Activated B cell treated with CpG ODN at 0.5 μM for 24 hours (primary cell): ENCODE measurements at regions of chr22 and their contacts with region 1.

Region 1: GRCh38 chr22:31080848-31081649 is at the start of gene SMTN:
- DNase-seq: peak; percentile 93
- ATAC-seq: peak; percentile 75
- H3K4me3 Mint-ChIP-seq: peak within 1 kb of the TSS; percentile 90
- H3K27ac Mint-ChIP-seq: no peak within 1 kb of the TSS
- H3K4me1 Mint-ChIP-seq: peaks cover 36% of the 10 kb centered on the region
- H3K27me3 Mint-ChIP-seq: no peaks in the 10 kb centered on the region
- CTCF ChIP-seq: no peak
- total RNA-seq, gene SMTN: 2.8 and 3.1 TPM in 2 replicates

Region 2: DNA sequence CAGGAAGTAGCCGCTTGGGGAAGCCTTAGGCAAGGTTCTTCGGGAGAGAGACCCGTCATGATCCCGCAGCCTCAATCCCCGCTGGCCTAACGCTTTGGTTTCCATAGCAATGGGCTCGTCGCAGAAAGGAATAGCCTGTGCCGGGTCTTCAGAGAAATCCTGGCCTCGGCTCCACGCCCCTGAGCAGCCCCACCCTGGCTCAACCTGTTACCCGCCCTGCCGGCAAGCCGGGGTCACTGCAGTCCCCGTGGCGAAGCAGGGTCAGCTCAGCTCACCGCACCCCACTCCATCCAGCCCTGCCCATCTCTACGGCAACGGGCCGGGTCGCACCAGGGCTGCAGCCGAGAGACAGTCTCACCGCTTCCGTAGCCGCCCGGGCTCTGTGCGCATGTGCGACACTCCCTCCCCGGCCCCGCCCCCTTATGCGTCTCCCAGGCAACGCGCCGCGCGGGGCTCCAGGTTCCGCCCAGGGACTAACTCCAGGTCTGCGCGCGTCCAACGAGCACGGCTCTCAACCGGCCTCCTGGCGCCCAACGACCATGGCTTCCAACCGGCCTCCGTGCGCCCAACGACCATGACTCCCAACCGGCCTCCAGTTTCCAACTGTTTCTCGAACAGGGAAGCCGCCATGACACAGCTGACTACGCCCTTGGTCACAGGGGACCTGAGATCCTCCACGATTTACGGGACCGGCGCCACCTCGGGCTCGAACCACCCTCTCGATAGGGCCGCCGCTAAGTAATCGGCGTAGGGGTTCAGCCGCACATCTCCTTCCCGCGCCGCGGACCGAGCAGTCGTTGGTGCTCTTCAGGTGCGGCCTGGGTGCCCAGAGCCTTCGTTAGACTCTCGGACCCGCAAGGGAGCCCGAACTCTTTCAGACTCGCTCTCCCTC is 413.3 kb before region 1 on chr22 and contains the start of gene DUSP18:
- CTCF ChIA-PET with region 1: no interaction called
- POLR2A ChIA-PET with region 1: no interaction called
- intact Hi-C with region 1: loop called (anchors 10 kb)
- DNase-seq: peak; percentile 95
- ATAC-seq: peak; percentile 94
- H3K4me3 Mint-ChIP-seq: peak within 1 kb of the TSS; percentile 97
- H3K27ac Mint-ChIP-seq: peak within 1 kb of the TSS; percentile 86
- H3K4me1 Mint-ChIP-seq: peaks cover 18% of the 10 kb centered on the region
- H3K27me3 Mint-ChIP-seq: no peaks in the 10 kb centered on the region
- CTCF ChIP-seq: no peak
- total RNA-seq, gene DUSP18: 12.0 and 13.5 TPM in 2 replicates

Region 3: GRCh38 chr22:30968924-30969539 is 112.0 kb before region 1 on chr22 and contains the start of gene TUG1:
- CTCF ChIA-PET with region 1: interaction called, 6 read pairs
- POLR2A ChIA-PET with region 1: interaction called, 41 read pairs
- intact Hi-C with region 1: loop called (anchors 1 kb)
- DNase-seq: peak; percentile 93
- ATAC-seq: peak; percentile 92
- H3K4me3 Mint-ChIP-seq: peak within 1 kb of the TSS; percentile 95
- H3K27ac Mint-ChIP-seq: peak within 1 kb of the TSS; percentile 94
- H3K4me1 Mint-ChIP-seq: peaks cover 56% of the 10 kb centered on the region
- H3K27me3 Mint-ChIP-seq: no peaks in the 10 kb centered on the region
- CTCF ChIP-seq: no peak
- total RNA-seq, gene TUG1: 70.4 and 83.0 TPM in 2 replicates

Region 4: DNA sequence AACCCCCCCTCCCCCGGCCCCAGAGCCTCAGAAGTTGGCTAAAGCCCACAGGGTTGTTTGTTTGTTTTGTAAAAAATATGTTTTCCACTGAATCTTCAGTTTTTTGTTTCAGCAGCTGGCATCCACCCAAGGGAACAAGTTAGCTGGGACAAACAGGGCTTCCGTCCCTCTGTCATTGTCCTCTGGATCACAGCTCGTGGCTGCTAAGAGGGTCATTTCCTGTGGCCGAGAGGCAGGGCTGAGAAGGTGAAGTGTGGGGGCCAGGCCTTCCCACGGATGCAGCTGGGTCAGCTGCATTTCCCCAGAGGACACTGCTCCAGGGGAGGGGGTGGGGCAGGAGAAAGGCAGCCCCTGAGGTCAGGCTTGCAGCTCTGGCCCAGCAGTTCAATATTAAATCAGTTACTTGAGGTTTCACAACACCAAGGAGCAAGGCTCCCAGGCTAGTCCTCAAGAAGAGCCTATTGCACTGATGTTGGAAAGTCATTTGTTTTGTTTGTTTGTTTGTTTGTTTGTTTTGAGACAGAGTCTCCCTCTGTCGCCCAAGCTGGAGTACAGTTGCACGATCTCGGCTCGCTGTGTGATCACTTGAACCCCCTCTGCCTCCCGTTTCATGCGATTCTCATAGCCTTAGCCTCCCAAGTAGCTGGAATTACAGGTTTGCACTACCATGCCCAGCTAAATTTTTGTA is 34.4 kb before region 1 on chr22:
- CTCF ChIA-PET with region 1: no interaction called
- POLR2A ChIA-PET with region 1: no interaction called
- intact Hi-C with region 1: no loop called
- DNase-seq: no peak
- ATAC-seq: no peak
- H3K4me3 Mint-ChIP-seq: no peak overlapping the region
- H3K27ac Mint-ChIP-seq: no peak overlapping the region
- H3K4me1 Mint-ChIP-seq: no peaks in the 10 kb centered on the region
- H3K27me3 Mint-ChIP-seq: peaks cover 10% of the 10 kb centered on the region
- CTCF ChIP-seq: no peak

Region 5: DNA sequence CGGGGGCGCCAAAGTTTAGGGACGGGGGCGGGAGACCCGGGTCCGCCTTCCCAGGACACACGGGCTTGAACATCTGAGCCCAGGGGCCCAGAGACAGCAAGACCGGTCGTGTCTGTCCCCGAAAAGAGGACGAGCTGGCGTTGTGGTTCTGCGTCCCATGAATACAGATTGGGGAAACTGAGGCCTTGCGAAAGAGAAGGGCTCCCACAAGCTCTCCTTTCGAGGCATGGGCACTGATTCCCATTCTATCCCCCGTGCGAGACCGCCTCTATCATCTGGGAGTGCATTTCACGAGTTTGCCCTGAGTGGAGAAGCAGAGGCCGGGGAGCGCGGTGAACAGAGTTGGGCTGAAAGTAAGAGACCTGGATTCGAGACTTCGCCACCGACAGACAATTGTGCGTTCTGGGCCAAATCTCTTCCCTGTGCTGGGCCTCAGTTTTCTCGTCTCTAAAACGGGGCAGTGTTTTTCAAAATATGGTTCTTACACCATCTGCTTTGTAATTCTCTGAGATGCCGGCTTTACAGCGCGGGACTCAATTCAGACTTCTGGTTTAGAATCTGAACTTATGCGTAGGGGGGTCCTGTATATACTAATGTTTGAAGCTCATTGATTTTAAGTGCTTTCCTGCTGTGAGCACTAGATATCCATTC is 79.4 kb after region 1 on chr22:
- CTCF ChIA-PET with region 1: no interaction called
- POLR2A ChIA-PET with region 1: interaction called, 14 read pairs
- intact Hi-C with region 1: loop called (anchors 2 kb)
- DNase-seq: no peak
- ATAC-seq: peak; percentile 40
- H3K4me3 Mint-ChIP-seq: peak overlapping the region; percentile 99
- H3K27ac Mint-ChIP-seq: peak overlapping the region; percentile 96
- H3K4me1 Mint-ChIP-seq: peaks cover 30% of the 10 kb centered on the region
- H3K27me3 Mint-ChIP-seq: no peaks in the 10 kb centered on the region
- CTCF ChIP-seq: no peak